B cell (primary cell): ENCODE measurements at regions of chr11 and their contacts with region 1.

Region 1: DNA sequence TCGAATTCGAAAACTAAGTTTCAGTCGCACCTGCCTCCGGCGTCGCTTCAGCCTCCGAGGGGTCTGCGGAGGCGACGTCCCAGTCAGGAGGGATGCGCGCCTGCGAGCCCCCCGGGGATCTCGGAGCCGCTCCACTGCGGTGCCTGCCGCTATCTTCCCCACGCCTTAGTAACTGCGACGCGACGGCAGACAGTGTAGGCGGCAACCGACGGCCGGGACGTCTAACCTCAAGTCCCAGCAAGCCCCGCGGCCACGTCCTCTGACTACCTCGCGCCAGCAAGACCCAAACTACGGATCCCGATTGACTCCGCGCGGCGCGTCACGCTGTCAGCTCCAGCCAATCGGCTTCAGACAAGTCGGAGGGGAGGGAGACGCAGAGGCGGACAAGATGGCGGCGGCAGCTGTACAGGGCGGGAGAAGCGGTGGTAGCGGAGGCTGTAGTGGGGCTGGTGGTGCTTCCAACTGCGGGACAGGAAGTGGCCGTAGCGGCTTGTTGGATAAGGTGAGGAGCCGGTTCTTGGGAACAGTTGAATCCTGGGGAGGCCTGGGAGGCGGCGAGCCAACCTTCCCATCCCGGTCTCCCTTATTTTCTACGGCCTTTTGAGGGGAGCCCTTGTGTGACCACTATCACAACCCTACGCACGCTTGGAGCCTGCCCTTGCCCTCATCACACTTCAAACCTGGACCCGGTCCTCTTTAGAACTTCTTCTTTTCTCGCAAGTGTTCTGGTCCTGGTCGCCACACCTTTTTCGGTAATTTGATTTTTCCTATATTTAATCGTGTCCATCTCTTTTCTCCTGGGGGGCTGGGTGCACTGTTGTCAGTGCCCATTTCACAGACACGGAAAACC is at the starts of genes SPCS2 and XRRA1:
- DNase-seq: peak; percentile 98
- ATAC-seq: peak; percentile 96
- H3K4me3 ChIP-seq: peak within 1 kb of the TSS; percentile 71 to 98 (median 84)
- H3K4me3 Mint-ChIP-seq: peak within 1 kb of the TSS; percentile 94
- H3K27ac ChIP-seq: peak within 1 kb of the TSS; percentile 85 to 95
- H3K27ac Mint-ChIP-seq: peak within 1 kb of the TSS; percentile 96
- H3K4me1 ChIP-seq: peaks cover 43 to 50% of the 10 kb centered on the region in 2 donors
- H3K4me1 Mint-ChIP-seq: peaks cover 62% of the 10 kb centered on the region
- H3K27me3 ChIP-seq: no peaks in the 10 kb centered on the region
- H3K27me3 Mint-ChIP-seq: no peaks in the 10 kb centered on the region
- CTCF ChIP-seq: no peak
- total RNA-seq, gene SPCS2: 98.5 and 106 TPM in 2 replicates
- total RNA-seq, gene XRRA1: 80.8 and 81.9 TPM in 2 replicates

Region 2: GRCh38 chr11:74492974-74493790 is 455.9 kb before region 1 on chr11 and contains the start of gene LIPT2:
- CTCF ChIA-PET with region 1: no interaction called
- POLR2A ChIA-PET with region 1: no interaction called
- intact Hi-C with region 1: loop called (anchors 5 kb)
- DNase-seq: peak; percentile 98
- ATAC-seq: peak; percentile 94
- H3K4me3 ChIP-seq: peak within 1 kb of the TSS; percentile 32 to 79 (median 75)
- H3K4me3 Mint-ChIP-seq: peak within 1 kb of the TSS; percentile 90
- H3K27ac ChIP-seq: peak within 1 kb of the TSS; percentile 47 to 78
- H3K27ac Mint-ChIP-seq: peak within 1 kb of the TSS; percentile 94
- H3K4me1 ChIP-seq: peaks cover 7 to 14% of the 10 kb centered on the region in 2 donors
- H3K4me1 Mint-ChIP-seq: peaks cover 13% of the 10 kb centered on the region
- H3K27me3 ChIP-seq: no peaks in the 10 kb centered on the region
- H3K27me3 Mint-ChIP-seq: no peaks in the 10 kb centered on the region
- CTCF ChIP-seq: no peak
- total RNA-seq, gene LIPT2: 6.5 and 20.2 TPM in 2 replicates

Region 3: GRCh38 chr11:74988541-74989260 is 39.6 kb after region 1 on chr11 and contains the start of gene NEU3:
- CTCF ChIA-PET with region 1: no interaction called
- POLR2A ChIA-PET with region 1: interaction called, 9 read pairs
- intact Hi-C with region 1: loop called (anchors 1 kb)
- DNase-seq: peak; percentile 88
- ATAC-seq: peak; percentile 98
- H3K4me3 ChIP-seq: peak within 1 kb of the TSS; percentile 66 to 99 (median 88)
- H3K4me3 Mint-ChIP-seq: peak within 1 kb of the TSS; percentile 95
- H3K27ac ChIP-seq: peak within 1 kb of the TSS; percentile 67 to 93
- H3K27ac Mint-ChIP-seq: peak within 1 kb of the TSS; percentile 82
- H3K4me1 ChIP-seq: peaks cover 12 to 28% of the 10 kb centered on the region in 2 donors
- H3K4me1 Mint-ChIP-seq: peaks cover 40% of the 10 kb centered on the region
- H3K27me3 ChIP-seq: no peaks in the 10 kb centered on the region
- H3K27me3 Mint-ChIP-seq: no peaks in the 10 kb centered on the region
- CTCF ChIP-seq: no peak
- total RNA-seq, gene NEU3: 15.2 and 17.0 TPM in 2 replicates